Mammary epithelial cell (primary cell): ENCODE measurements at regions of chr16 and their contacts with region 1.

Region 1: DNA sequence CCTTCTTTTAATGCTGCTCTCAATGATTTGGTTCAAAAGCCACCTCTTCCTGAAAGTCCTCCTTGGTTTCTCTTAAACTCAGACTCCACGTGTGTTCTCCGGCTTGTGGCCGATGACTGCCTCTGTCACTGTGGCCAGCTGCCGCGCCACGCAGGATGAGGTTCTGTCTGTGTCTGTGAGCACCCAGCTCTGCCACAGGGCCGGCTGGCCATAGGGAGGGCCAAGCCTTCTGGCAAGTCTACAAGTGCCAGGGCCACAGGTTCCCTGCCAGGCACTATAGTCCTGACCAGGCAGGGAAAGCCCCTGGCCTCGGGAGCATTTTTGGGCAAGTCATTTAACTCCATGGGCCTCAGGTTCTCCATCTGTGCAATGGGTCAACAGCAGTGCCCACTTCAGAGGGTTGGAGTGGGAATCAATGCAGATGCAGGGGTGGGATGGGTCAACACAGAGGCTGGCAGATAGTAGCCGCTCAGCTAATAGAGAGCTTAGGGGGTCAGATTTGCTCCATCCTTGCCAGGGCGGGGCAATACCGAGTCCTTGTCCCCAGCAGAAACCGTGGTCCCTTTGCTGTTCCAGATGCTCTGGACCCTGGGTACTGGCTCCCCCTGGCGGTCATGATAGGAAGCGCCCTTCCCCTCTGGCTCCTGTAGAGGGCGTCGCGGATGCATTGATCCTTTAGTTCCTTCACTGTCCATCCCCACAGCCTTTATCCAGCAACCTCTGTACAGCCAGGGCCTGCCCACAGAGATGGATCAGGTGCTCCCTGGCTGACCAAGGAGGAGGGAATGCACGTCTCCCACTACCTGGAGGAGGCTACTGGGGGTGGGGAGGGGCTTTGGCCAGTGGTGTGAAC is 19.3 kb upstream of the ADGRG3 start:
- DNase-seq: peak; percentile 70
- H3K4me3 ChIP-seq: no peak overlapping the region
- H3K27ac ChIP-seq: no peak overlapping the region
- H3K4me1 ChIP-seq: peaks cover 52% of the 10 kb centered on the region
- H3K27me3 ChIP-seq: no peaks in the 10 kb centered on the region
- CTCF ChIP-seq: peak; percentile 100

Region 2: DNA sequence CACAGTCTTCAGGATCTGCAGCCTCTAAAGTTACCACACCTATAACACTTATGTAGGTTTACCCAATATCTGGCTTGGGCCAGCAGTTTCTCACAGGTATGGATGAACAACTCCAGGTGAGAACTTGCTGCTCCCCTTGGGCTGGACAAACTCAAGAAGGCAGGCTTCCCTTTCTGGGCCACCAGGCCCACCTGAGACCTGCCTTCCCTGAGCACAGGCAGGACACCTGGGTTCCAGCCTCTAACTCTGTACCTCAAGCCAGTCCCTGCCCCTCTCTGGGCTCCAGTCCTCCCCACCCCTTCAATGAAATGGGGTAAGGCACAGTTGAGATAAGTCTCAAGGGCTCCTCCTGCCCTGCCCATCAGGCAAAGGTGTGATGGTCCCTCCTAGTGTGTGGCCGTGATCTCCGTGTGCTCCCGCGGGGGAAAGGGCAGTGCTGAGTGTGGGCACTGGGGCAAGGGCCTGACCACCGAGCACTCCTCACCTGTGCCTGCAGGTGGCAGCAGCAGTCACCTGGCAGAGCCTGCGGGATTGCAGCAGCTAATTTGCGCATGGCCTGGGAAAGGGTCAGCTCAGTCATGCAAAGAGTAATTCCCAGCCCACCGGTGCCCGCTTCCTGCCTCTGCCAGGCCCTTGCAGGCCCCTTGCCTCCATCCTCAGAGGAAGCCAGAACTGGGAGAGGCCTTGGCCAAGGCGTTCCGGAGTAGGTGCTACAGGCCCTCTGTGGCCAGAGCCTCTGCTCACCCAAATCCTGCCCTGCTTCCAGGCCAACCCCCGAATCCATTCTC is 48.6 kb before region 1 on chr16:
- CTCF ChIA-PET with region 1: interaction called, 16 read pairs
- dilution Hi-C with region 1: no loop called
- in situ Hi-C with region 1: loop called in 1 of 2 experiments (anchors 5 kb)
- intact Hi-C with region 1: loop called (anchors 1 kb)
- DNase-seq: peak; percentile 45
- H3K4me3 ChIP-seq: no peak overlapping the region
- H3K27ac ChIP-seq: no peak overlapping the region
- H3K4me1 ChIP-seq: peaks cover 6% of the 10 kb centered on the region
- H3K27me3 ChIP-seq: peaks cover 3% of the 10 kb centered on the region
- CTCF ChIP-seq: peak; percentile 93 to 94

Region 3: GRCh38 chr16:57609541-57610401 is 39.0 kb before region 1 on chr16:
- CTCF ChIA-PET with region 1: interaction called, 4 read pairs
- dilution Hi-C with region 1: no loop called
- in situ Hi-C with region 1: no loop called
- intact Hi-C with region 1: loop called (anchors 2 kb)
- DNase-seq: no peak
- H3K4me3 ChIP-seq: no peak overlapping the region
- H3K27ac ChIP-seq: no peak overlapping the region
- H3K4me1 ChIP-seq: no peaks in the 10 kb centered on the region
- H3K27me3 ChIP-seq: no peaks in the 10 kb centered on the region
- CTCF ChIP-seq: peak; percentile 10 to 44

Region 4: DNA sequence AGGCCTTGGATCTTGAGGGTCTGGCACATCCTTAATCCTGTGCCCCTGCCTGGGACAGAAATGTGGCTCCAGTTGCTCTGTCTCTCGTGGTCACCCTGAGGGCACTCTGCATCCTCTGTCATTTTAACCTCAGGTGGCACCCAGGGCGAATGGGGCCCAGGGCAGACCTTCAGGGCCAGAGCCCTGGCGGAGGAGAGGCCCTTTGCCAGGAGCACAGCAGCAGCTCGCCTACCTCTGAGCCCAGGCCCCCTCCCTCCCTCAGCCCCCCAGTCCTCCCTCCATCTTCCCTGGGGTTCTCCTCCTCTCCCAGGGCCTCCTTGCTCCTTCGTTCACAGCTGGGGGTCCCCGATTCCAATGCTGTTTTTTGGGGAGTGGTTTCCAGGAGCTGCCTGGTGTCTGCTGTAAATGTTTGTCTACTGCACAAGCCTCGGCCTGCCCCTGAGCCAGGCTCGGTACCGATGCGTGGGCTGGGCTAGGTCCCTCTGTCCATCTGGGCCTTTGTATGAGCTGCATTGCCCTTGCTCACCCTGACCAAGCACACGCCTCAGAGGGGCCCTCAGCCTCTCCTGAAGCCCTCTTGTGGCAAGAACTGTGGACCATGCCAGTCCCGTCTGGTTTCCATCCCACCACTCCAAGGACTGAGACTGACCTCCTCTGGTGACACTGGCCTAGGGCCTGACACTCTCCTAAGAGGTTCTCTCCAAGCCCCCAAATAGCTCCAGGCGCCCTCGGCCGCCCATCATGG is 15.3 kb after region 1 on chr16:
- CTCF ChIA-PET with region 1: interaction called, 23 read pairs
- dilution Hi-C with region 1: no loop called
- in situ Hi-C with region 1: no loop called
- intact Hi-C with region 1: no loop called
- DNase-seq: no peak
- H3K4me3 ChIP-seq: no peak overlapping the region
- H3K27ac ChIP-seq: no peak overlapping the region
- H3K4me1 ChIP-seq: peaks cover 9% of the 10 kb centered on the region
- H3K27me3 ChIP-seq: no peaks in the 10 kb centered on the region
- CTCF ChIP-seq: no peak

Region 5: GRCh38 chr16:57694725-57695679 is 46.2 kb after region 1 on chr16 and contains the start of gene DRC7:
- CTCF ChIA-PET with region 1: no interaction called
- dilution Hi-C with region 1: no loop called
- in situ Hi-C with region 1: no loop called
- intact Hi-C with region 1: no loop called
- DNase-seq: peak; percentile 29
- H3K4me3 ChIP-seq: peak within 1 kb of the TSS in 1 of 3 experiments; percentile 0
- H3K27ac ChIP-seq: no peak within 1 kb of the TSS
- H3K4me1 ChIP-seq: no peaks in the 10 kb centered on the region
- H3K27me3 ChIP-seq: peaks cover 2% of the 10 kb centered on the region
- CTCF ChIP-seq: no peak
- total RNA-seq, gene DRC7: not detected

Region 6: DNA sequence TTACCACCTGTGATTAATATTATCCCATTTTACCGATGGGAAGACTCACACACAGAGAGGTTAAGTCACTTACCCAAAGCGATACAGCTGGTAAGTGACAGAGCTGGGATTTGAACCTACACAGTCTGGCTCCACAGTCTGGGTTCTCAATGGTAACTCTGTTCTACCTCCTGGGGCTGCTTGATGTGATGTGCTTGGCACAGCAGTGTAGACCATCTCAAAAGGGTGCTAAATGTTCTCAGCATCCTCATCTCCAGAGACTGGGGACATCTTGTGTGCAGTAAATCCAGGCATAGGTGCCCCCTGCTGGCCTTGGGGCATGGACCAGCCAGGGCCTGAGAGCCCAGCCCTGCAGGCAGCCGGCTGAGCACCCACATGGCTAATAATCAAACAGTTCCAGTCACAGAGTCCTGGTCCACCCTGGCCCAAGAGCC is 71.3 kb after region 1 on chr16:
- CTCF ChIA-PET with region 1: no interaction called
- dilution Hi-C with region 1: no loop called
- in situ Hi-C with region 1: no loop called
- intact Hi-C with region 1: loop called (anchors 2 kb)
- DNase-seq: peak; percentile 39
- H3K4me3 ChIP-seq: no peak overlapping the region
- H3K27ac ChIP-seq: no peak overlapping the region
- H3K4me1 ChIP-seq: no peaks in the 10 kb centered on the region
- H3K27me3 ChIP-seq: peaks cover 3% of the 10 kb centered on the region
- CTCF ChIP-seq: peak; percentile 60 to 68

Region 7: DNA sequence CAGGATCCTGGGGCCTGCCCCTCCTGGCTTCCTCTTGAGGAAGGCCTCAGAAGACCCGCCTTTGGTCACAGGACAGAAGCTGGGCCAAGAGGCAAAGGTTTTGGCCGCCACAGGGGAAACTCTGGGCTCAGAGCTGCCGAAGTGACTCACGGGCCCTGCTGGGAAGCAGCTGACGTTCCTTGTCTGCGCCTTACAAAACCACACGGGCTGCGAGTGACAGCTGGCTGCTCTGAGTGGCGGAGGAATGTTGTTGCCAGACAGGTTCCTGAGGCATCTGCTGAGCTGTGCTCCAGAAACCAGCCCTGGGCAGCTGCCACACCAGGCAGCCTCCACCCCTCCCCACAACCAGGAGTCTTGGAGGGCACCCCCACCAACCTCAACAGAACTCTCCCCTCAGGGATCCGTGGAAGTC is 167.5 kb after region 1 on chr16:
- CTCF ChIA-PET with region 1: interaction called, 22 read pairs
- dilution Hi-C with region 1: no loop called
- in situ Hi-C with region 1: no loop called
- intact Hi-C with region 1: no loop called
- DNase-seq: peak; percentile 98
- H3K4me3 ChIP-seq: no peak overlapping the region
- H3K27ac ChIP-seq: peak overlapping the region; percentile 85
- H3K4me1 ChIP-seq: peaks cover 41% of the 10 kb centered on the region
- H3K27me3 ChIP-seq: no peaks in the 10 kb centered on the region
- CTCF ChIP-seq: no peak

Region 8: DNA sequence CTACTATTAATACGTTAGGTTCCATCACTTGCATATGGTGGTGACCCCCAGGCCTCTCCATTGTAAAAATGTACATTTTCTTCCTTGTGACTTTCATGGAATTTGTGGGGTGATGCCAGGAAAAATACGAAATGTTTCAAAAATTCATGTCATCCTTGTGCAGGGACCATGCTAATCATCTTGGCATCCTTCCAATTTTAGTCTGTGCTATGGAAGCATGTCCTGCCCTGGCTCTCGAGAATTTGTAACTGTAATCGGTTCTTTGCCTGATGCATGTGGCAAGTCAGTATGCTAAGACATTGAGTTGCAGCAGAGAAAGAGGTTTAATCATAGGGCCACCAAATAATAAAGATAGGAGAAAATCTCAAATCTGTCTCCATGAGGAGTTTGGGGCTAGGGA is 729.1 kb after region 1 on chr16:
- CTCF ChIA-PET with region 1: no interaction called
- dilution Hi-C with region 1: no loop called
- in situ Hi-C with region 1: no loop called
- intact Hi-C with region 1: no loop called
- DNase-seq: no peak
- H3K4me3 ChIP-seq: no peak overlapping the region
- H3K27ac ChIP-seq: no peak overlapping the region
- H3K4me1 ChIP-seq: peaks cover 4% of the 10 kb centered on the region
- H3K27me3 ChIP-seq: no peaks in the 10 kb centered on the region
- CTCF ChIP-seq: no peak